Right cardiac atrium (tissue), 5 donors: ENCODE measurements at regions of chr11 and their contacts with region 1.

Region 1: GRCh38 chr11:47499614-47500013 is 50.7 kb upstream of the RAPSN start:
- DNase-seq: no peak
- ATAC-seq: peak; percentile 59 to 63
- H3K4me3 ChIP-seq: no peak overlapping the region
- H3K27ac ChIP-seq: no peak overlapping the region
- H3K4me1 ChIP-seq: peaks cover 2% of the 10 kb centered on the region
- H3K27me3 ChIP-seq: no peaks in the 10 kb centered on the region

Region 2: DNA sequence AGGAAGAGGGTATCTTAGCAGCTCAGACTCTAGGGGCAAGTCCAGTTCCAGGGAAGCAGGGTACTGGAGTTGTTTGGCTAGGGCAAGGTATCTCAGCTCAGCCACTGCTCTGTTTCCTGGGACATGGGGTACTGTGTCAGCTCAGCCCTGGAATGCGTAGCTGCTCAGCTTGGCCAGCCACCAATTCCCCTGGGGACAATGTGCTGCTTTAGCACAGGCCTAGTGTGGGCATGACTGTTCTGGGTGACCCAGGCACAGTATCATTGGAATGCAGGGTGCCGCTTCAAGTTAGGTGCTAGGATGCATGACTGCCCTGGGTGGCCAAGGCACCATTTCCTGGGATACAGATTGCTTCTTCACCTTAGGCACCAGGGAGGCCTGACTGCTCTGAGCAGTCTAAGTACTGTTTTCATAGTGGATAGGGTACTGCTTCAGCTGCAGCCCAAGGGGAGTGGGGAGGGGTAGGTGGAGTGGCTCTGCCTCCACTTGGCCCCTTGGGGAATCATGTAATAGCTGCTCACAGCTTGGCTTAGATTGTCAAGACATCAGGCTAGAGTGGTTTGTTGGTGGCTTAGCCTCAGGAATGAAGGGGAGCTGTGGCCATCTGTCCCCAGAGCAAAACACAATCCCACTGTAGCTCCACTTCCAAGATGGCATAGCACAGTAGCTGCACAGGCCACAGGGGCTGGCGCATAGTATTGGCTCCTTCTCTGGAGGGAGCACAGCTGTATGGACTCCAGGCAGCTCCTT is 193.7 kb before region 1 on chr11:
- intact Hi-C with region 1: no loop called
- DNase-seq: peak; percentile 59 to 86 (median 82)
- ATAC-seq: peak; percentile 92 to 96
- H3K4me3 ChIP-seq: no peak overlapping the region
- H3K27ac ChIP-seq: peak overlapping the region; percentile 94
- H3K4me1 ChIP-seq: peaks cover 13% of the 10 kb centered on the region
- H3K27me3 ChIP-seq: no peaks in the 10 kb centered on the region

Region 3: DNA sequence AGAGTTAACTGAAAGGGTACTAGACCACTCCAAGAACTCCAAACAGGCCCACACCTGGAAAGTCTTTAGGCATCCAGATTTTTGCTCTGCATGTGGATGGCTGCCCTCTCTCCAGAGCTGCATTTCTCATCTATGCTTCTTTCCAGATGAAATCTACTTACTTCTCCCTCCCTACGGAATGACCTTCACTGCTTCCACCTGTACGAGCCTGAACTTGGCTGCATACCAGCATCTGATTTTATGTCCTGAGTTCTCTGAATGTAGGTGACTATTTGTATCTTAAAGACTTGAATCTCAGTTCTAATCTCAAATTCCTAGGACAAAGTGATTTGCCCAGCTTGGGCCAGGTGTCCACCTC is 40.0 kb after region 1 on chr11:
- intact Hi-C with region 1: loop called in 1 of 4 experiments (anchors 10 kb)
- DNase-seq: no peak
- ATAC-seq: no peak
- H3K4me3 ChIP-seq: no peak overlapping the region
- H3K27ac ChIP-seq: no peak overlapping the region
- H3K4me1 ChIP-seq: peaks cover 14% of the 10 kb centered on the region
- H3K27me3 ChIP-seq: no peaks in the 10 kb centered on the region